ENCODE measurements at regions of chr7 and their contacts with region 1.

Region 1: DNA sequence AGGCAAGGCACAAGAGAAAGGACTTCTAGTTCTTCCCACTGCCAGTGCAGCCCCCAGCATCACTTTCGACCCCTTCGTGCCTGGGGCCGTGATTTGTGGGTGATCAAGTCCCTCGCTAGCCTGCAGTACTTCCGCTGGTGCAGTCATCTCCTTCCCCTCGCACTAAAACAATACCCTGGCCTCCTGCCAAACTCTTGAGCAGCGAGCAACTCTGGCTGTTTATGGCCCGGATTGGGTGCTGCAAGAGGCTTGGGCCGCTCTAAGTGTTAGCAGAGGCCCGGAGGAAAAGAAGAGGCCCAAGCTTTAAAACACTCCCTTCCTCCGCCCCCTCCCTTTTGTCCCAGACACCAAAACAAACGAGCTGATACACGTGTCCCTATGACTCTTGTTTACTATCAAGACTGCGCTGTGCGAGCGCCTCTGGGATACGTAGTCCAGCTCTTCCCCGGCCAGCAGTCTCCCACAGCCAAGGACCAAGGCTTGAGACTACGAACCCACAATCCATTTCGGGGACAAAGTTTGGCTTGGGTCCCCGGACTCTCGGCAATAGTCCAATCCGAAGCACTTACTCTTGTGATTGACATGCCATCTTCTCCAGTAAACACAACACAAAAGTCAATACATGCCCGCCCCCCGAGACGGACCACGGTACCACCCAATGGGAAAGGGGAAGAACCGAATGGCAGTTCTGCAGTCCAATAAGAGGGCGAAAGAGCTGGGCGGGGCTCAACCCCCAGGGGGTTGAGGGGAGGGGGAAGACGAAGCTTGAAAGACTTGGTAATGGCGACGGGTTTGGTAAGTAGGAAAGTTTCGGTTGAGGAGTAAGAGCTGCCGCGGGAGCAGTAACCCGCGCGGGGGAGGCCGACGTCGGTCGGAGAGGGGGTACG is at the start of gene HBP1:
- DNase-seq: peak; percentile 100
- H3K4me3 ChIP-seq: peak within 1 kb of the TSS; percentile 81 to 94
- H3K27ac ChIP-seq: peak within 1 kb of the TSS; percentile 94 to 100
- H3K4me1 ChIP-seq: peaks cover 2 to 23% of the 10 kb centered on the region in 2 donors
- H3K27me3 ChIP-seq: no peaks in the 10 kb centered on the region
- CTCF ChIP-seq: no peak
- total RNA-seq, gene HBP1: 62.2 TPM

Region 2: GRCh38 chr7:105522062-105522936 is 1646.2 kb before region 1 on chr7 and contains the start of gene PUS7:
- intact Hi-C with region 1: loop called (anchors 5 kb)
- DNase-seq: peak; percentile 30 to 94
- H3K4me3 ChIP-seq: peak within 1 kb of the TSS; percentile 58 to 97
- H3K27ac ChIP-seq: peak within 1 kb of the TSS; percentile 80 to 90
- H3K4me1 ChIP-seq: peaks cover 5 to 8% of the 10 kb centered on the region in 2 donors
- H3K27me3 ChIP-seq: no peaks in the 10 kb centered on the region
- CTCF ChIP-seq: no peak
- total RNA-seq, gene PUS7: 17.2 TPM

Region 3: DNA sequence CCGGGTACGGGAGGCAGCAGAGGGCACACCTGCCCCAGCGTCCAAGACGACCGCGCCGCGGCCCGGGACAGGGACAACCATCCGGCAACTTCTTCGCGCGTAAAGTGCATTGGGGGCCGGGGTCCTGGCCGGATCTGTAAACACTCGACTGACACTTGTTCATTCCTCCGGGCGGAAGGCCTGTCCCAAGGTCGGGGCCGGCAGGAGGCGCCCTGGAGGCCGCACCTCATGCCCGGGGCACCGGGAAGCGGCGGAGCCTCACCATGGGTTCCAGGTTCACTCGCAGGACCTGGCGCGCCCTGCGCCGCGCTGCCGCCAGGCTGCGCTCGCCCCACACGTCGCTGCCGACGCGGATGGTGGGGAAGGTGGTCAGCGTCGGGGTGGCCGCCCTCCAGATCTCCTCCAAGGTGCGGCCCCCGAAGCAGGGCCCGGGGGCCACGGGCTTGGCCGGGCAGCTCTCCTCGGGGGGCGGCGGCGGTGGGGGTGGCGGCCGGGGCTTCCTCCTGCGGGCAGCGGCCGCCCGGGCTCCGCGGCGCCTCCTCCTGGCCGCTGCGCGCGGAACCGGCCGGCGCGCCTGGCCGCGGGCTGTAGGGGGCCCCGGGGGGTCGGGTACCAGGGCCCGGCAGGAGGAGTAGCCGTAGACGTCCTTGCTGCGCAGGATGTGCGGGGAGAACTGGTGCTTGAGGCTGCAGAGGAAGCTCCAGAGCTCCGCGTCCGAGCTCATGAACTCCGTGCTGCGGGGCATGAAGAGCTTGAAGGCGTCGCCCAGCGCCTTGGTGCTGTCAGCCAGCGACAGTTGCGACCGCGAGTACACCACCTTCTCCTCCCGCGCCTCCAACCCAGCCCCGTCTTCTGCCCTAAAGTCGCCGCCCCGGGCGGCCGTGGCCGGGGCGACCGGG is 508.3 kb before region 1 on chr7:
- intact Hi-C with region 1: loop called (anchors 2 kb)
- DNase-seq: peak; percentile 30 to 90
- H3K4me3 ChIP-seq: peak overlapping the region; percentile 93 to 99
- H3K27ac ChIP-seq: peak overlapping the region; percentile 96 to 99
- H3K4me1 ChIP-seq: peaks cover 4 to 13% of the 10 kb centered on the region in 2 donors
- H3K27me3 ChIP-seq: no peaks in the 10 kb centered on the region
- CTCF ChIP-seq: peak; percentile 50 to 77 (median 73)

Region 4: GRCh38 chr7:107387128-107387527 is 218.7 kb after region 1 on chr7:
- intact Hi-C with region 1: loop called (anchors 5 kb)
- DNase-seq: peak; percentile 12 to 76
- H3K4me3 ChIP-seq: peak overlapping the region in 1 of 2 donors; percentile 42
- H3K27ac ChIP-seq: peak overlapping the region; percentile 66 to 82
- H3K4me1 ChIP-seq: peaks cover 11 to 17% of the 10 kb centered on the region in 2 donors
- H3K27me3 ChIP-seq: no peaks in the 10 kb centered on the region
- CTCF ChIP-seq: no peak

Region 5: GRCh38 chr7:107879400-107880035 is 711.0 kb after region 1 on chr7:
- intact Hi-C with region 1: loop called (anchors 10 kb)
- DNase-seq: no peak
- H3K4me3 ChIP-seq: no peak overlapping the region
- H3K27ac ChIP-seq: no peak overlapping the region
- H3K4me1 ChIP-seq: no peaks in the 10 kb centered on the region
- H3K27me3 ChIP-seq: no peaks in the 10 kb centered on the region
- CTCF ChIP-seq: peak; percentile 41 to 61 (median 59)